Activated naive CD4-positive, alpha-beta T cell treated with anti-CD3 and anti-CD28 coated beads for 36 hours (primary cell): ENCODE measurements at regions of chr4 and their contacts with region 1.

Region 1: GRCh38 chr4:113761620-113762185 is at the start of gene CAMK2D:
- DNase-seq: peak; percentile 96
- H3K4me3 Mint-ChIP-seq: peak within 1 kb of the TSS; percentile 95
- H3K27ac Mint-ChIP-seq: peak within 1 kb of the TSS; percentile 99
- H3K4me1 Mint-ChIP-seq: peaks cover 37% of the 10 kb centered on the region
- H3K27me3 Mint-ChIP-seq: no peaks in the 10 kb centered on the region
- total RNA-seq, gene CAMK2D: 75.7 to 78.3 TPM

Region 2: GRCh38 chr4:112817933-112818593 is 943.6 kb before region 1 on chr4:
- CTCF ChIA-PET with region 1: no interaction called
- intact Hi-C with region 1: loop called (anchors 5 kb)
- DNase-seq: peak; percentile 88
- H3K4me3 Mint-ChIP-seq: peak overlapping the region; percentile 79
- H3K27ac Mint-ChIP-seq: peak overlapping the region; percentile 62
- H3K4me1 Mint-ChIP-seq: peaks cover 15% of the 10 kb centered on the region
- H3K27me3 Mint-ChIP-seq: peaks cover 36% of the 10 kb centered on the region

Region 3: GRCh38 chr4:113394730-113395530 is 366.8 kb before region 1 on chr4:
- CTCF ChIA-PET with region 1: interaction called, 3 read pairs
- intact Hi-C with region 1: loop called (anchors 1 kb)
- DNase-seq: peak; percentile 70
- H3K4me3 Mint-ChIP-seq: no peak overlapping the region
- H3K27ac Mint-ChIP-seq: no peak overlapping the region
- H3K4me1 Mint-ChIP-seq: no peaks in the 10 kb centered on the region
- H3K27me3 Mint-ChIP-seq: peaks cover 1% of the 10 kb centered on the region

Region 4: GRCh38 chr4:113539408-113539807 is 222.3 kb before region 1 on chr4:
- CTCF ChIA-PET with region 1: interaction called, 3 read pairs
- intact Hi-C with region 1: loop called (anchors 1 kb)
- DNase-seq: peak; percentile 39
- H3K4me3 Mint-ChIP-seq: no peak overlapping the region
- H3K27ac Mint-ChIP-seq: peak overlapping the region; percentile 67
- H3K4me1 Mint-ChIP-seq: peaks cover 33% of the 10 kb centered on the region
- H3K27me3 Mint-ChIP-seq: no peaks in the 10 kb centered on the region

Region 5: GRCh38 chr4:113684534-113685091 is 77.1 kb before region 1 on chr4:
- CTCF ChIA-PET with region 1: no interaction called
- intact Hi-C with region 1: loop called (anchors 1 kb)
- DNase-seq: peak; percentile 77
- H3K4me3 Mint-ChIP-seq: peak overlapping the region; percentile 23
- H3K27ac Mint-ChIP-seq: peak overlapping the region; percentile 88
- H3K4me1 Mint-ChIP-seq: peaks cover 74% of the 10 kb centered on the region
- H3K27me3 Mint-ChIP-seq: no peaks in the 10 kb centered on the region

Region 6: DNA sequence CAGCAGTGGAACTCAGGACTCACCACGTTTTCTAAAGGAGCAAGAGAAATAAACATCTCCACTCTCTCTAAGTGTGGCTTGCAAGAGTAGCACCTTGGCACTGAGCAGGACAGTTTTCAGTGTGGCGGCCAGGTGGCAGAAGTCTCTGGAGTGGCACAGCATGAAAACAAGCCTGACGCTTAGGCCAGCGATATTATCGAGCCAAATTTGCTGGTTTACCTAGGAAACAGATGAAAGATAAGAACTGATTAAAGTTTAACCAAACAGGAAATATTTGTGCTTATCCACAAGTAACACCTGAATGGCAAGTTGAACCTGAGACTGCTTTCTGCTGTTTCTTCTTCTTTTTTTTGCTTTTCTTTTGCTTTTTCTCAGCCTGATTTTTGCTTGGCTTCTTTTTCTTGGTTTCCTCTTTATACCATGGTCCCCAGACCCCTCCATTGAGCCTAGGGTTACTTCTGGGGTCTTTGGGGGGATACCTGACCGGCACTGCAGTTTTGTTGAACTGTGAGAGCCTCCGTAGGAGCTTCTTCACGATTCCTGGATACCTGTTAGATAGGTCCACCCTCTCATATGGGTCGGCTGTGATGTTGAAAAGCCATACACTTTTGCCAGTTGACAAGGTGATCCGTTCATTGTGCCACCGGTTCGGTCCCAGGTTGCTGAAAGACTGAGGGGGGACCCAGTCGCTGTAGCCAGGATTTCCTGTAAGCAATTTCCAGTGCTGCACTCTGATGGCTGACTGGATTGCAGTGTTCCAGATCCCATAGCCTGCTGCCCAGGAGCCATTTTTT is 140.5 kb after region 1 on chr4:
- CTCF ChIA-PET with region 1: no interaction called
- intact Hi-C with region 1: loop called (anchors 1 kb)
- DNase-seq: peak; percentile 82
- H3K4me3 Mint-ChIP-seq: peak overlapping the region; percentile 65
- H3K27ac Mint-ChIP-seq: peak overlapping the region; percentile 82
- H3K4me1 Mint-ChIP-seq: peaks cover 58% of the 10 kb centered on the region
- H3K27me3 Mint-ChIP-seq: no peaks in the 10 kb centered on the region